ENCODE measurements at regions of chr15 and their contacts with region 1.

Region 1: DNA sequence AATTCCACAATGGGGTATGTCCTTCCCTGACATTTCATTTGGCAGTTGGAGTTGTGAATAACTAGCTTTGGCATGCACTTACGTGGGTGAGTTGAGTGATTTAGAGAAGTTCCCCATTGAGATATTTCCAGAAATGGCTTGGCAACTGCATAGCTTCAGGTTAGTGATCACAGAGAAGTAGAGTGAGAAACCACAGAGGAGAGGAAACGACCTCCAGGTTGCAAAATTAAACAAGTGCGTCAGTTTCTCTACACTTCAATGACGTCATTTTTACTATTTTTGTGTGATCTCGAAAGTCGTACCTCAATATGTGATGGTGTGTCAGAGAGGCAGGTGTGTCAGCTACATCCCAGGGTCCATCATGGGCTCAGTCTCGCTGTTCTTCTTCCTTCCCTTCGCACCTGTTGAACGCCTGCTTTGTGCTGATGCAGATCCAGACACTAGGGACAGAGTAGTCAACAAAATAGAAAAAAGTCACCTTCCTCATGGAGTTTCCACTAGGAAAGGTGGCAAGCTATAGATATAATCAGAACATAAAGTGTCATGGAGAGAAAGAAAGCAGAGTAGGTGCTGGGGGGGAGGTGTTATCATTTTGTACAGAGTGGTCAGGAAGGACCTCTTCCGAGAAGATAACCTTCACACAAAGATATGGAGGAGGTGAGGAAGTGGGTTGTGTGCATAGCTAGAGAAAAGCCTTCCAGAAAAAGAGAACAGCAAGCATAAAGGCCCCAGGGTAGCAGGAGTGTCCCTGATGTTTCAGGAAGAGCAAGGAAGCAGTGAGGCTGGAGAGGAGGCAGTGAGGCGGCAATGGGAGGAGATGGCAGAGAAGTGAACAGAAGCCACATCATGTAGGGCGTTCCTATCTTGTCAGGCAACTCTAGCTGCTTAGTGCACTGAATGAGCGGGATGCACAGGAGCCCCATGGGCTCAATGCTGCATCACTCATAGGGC is 75.6 kb downstream of the MCTP2 start:
- DNase-seq: peak; percentile 86
- ATAC-seq: peak; percentile 87
- H3K4me3 ChIP-seq: peak overlapping the region in 1 of 5 experiments; percentile 12
- H3K4me3 Mint-ChIP-seq: peak overlapping the region; percentile 64
- H3K27ac ChIP-seq: peak overlapping the region; percentile 58 to 64
- H3K27ac Mint-ChIP-seq: peak overlapping the region; percentile 91
- H3K4me1 ChIP-seq: peaks cover 27 to 41% of the 10 kb centered on the region in 2 donors
- H3K4me1 Mint-ChIP-seq: peaks cover 50% of the 10 kb centered on the region
- H3K27me3 ChIP-seq: no peaks in the 10 kb centered on the region
- H3K27me3 Mint-ChIP-seq: no peaks in the 10 kb centered on the region
- CTCF ChIP-seq: no peak

Region 2: GRCh38 chr15:93656040-93656439 is 650.9 kb before region 1 on chr15:
- CTCF ChIA-PET with region 1: no interaction called
- POLR2A ChIA-PET with region 1: no interaction called
- intact Hi-C with region 1: no loop called
- DNase-seq: no peak
- ATAC-seq: no peak
- H3K4me3 ChIP-seq: no peak overlapping the region
- H3K4me3 Mint-ChIP-seq: no peak overlapping the region
- H3K27ac ChIP-seq: no peak overlapping the region
- H3K27ac Mint-ChIP-seq: no peak overlapping the region
- H3K4me1 ChIP-seq: no peaks in the 10 kb centered on the region
- H3K4me1 Mint-ChIP-seq: no peaks in the 10 kb centered on the region
- H3K27me3 ChIP-seq: peaks cover 0 to 2% (median 0%) of the 10 kb centered on the region in 4 experiments
- H3K27me3 Mint-ChIP-seq: no peaks in the 10 kb centered on the region
- CTCF ChIP-seq: no peak

Region 3: DNA sequence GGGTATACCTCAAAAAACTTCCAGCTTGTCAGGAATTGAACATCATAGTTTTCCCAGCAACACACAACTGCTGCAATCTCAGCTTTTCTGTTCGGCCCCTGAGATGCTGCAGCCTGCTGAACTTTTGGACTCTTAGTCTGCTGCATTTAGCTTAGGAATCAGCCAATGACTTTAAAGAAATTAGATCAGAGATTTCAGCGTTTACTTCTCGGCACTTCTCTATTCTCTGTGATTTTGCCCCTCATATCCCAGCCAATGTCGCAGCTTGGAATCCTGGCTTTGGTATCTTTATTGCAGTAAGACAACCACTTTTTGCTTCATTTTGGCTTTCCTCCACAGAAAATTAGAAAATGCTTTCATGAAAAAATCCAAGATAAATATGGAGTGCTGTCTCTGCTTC is 161.9 kb before region 1 on chr15:
- CTCF ChIA-PET with region 1: no interaction called
- POLR2A ChIA-PET with region 1: no interaction called
- intact Hi-C with region 1: no loop called
- DNase-seq: no peak
- ATAC-seq: no peak
- H3K4me3 ChIP-seq: no peak overlapping the region
- H3K4me3 Mint-ChIP-seq: no peak overlapping the region
- H3K27ac ChIP-seq: no peak overlapping the region
- H3K27ac Mint-ChIP-seq: no peak overlapping the region
- H3K4me1 ChIP-seq: no peaks in the 10 kb centered on the region
- H3K4me1 Mint-ChIP-seq: no peaks in the 10 kb centered on the region
- H3K27me3 ChIP-seq: peaks cover 0 to 5% (median 2%) of the 10 kb centered on the region in 4 experiments
- H3K27me3 Mint-ChIP-seq: peaks cover 26% of the 10 kb centered on the region
- CTCF ChIP-seq: no peak

Region 4: GRCh38 chr15:94174399-94174802 is 132.6 kb before region 1 on chr15:
- CTCF ChIA-PET with region 1: no interaction called
- POLR2A ChIA-PET with region 1: no interaction called
- intact Hi-C with region 1: loop called (anchors 1 kb)
- DNase-seq: peak; percentile 66
- ATAC-seq: peak; percentile 91
- H3K4me3 ChIP-seq: no peak overlapping the region
- H3K4me3 Mint-ChIP-seq: peak overlapping the region; percentile 48
- H3K27ac ChIP-seq: no peak overlapping the region
- H3K27ac Mint-ChIP-seq: peak overlapping the region; percentile 3
- H3K4me1 ChIP-seq: peaks cover 19 to 22% of the 10 kb centered on the region in 2 donors
- H3K4me1 Mint-ChIP-seq: peaks cover 22% of the 10 kb centered on the region
- H3K27me3 ChIP-seq: peaks cover 0 to 14% (median 3%) of the 10 kb centered on the region in 4 experiments
- H3K27me3 Mint-ChIP-seq: peaks cover 43% of the 10 kb centered on the region
- CTCF ChIP-seq: no peak

Region 5: DNA sequence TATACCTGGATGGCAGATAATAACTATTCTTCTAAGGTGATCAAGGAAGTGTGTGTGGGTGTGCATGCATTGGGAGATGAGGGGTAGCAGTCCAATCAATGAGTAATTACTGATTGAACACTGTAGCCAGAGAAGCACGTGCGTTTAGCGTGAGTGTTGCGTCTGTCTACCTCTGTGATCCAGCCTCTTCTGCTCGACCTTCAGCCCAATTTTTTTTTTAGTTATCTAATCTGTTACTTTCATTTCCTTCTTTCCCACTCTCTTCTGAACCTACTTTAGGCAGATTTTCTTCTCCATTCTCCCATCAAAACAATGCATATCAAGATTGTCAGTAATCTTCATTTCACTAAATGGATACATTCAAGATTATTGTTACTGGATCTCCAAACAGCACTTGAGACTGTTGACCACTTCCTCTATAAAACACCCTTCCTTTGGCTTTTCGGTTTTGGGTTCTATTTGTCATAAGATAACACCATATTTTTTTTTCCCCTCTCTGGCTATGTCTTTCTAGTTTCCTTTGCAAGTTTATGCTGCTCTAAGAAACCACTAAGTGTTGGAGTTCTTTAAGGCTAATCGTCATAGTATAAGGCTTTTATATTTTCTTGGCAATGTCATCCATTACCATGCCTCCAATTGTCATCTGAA is 34.6 kb before region 1 on chr15:
- CTCF ChIA-PET with region 1: no interaction called
- POLR2A ChIA-PET with region 1: no interaction called
- intact Hi-C with region 1: no loop called
- DNase-seq: peak; percentile 73
- ATAC-seq: peak; percentile 72
- H3K4me3 ChIP-seq: peak overlapping the region in 1 of 5 experiments; percentile 5
- H3K4me3 Mint-ChIP-seq: no peak overlapping the region
- H3K27ac ChIP-seq: peak overlapping the region; percentile 27 to 71
- H3K27ac Mint-ChIP-seq: no peak overlapping the region
- H3K4me1 ChIP-seq: peaks cover 31 to 43% of the 10 kb centered on the region in 2 donors
- H3K4me1 Mint-ChIP-seq: peaks cover 18% of the 10 kb centered on the region
- H3K27me3 ChIP-seq: no peaks in the 10 kb centered on the region
- H3K27me3 Mint-ChIP-seq: no peaks in the 10 kb centered on the region
- CTCF ChIP-seq: no peak